CD4-positive, alpha-beta T cell (primary cell): ENCODE measurements at regions of chr1 and their contacts with region 1.

Region 1: DNA sequence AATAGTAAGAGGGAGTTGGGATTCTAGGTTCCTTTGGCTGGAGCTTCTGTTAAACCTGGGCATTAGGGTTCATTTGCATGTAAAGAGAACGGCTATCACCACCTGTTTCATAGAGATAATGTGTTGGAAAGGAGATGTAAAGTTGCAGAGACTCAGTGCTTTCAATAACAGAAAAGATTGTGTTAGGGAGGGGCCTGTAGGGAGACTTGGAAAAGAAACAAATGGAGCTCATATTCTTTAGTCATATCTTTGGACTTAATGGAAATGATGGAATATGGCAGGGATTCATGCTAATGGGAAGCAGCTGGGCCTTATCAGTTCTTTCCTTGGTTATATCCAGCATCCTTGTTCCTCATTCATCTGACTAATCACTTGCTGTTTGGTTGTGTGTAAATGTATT is 144.9 kb downstream of the CD247 start:
- DNase-seq: no peak
- ATAC-seq: no peak
- H3K4me3 ChIP-seq: no peak overlapping the region
- H3K4me3 Mint-ChIP-seq: no peak overlapping the region
- H3K27ac ChIP-seq: no peak overlapping the region
- H3K27ac Mint-ChIP-seq: no peak overlapping the region
- H3K4me1 ChIP-seq: no peaks in the 10 kb centered on the region
- H3K4me1 Mint-ChIP-seq: no peaks in the 10 kb centered on the region
- H3K27me3 ChIP-seq: no peaks in the 10 kb centered on the region
- H3K27me3 Mint-ChIP-seq: no peaks in the 10 kb centered on the region
- CTCF ChIP-seq: no peak

Region 2: GRCh38 chr1:167330601-167331293 is 42.7 kb before region 1 on chr1:
- CTCF ChIA-PET with region 1: no interaction called
- POLR2A ChIA-PET with region 1: no interaction called
- intact Hi-C with region 1: loop called in 1 of 2 experiments (anchors 5 kb)
- DNase-seq: no peak
- ATAC-seq: no peak
- H3K4me3 ChIP-seq: no peak overlapping the region
- H3K4me3 Mint-ChIP-seq: no peak overlapping the region
- H3K27ac ChIP-seq: no peak overlapping the region
- H3K27ac Mint-ChIP-seq: no peak overlapping the region
- H3K4me1 ChIP-seq: no peaks in the 10 kb centered on the region
- H3K4me1 Mint-ChIP-seq: peaks cover 37% of the 10 kb centered on the region
- H3K27me3 ChIP-seq: no peaks in the 10 kb centered on the region
- H3K27me3 Mint-ChIP-seq: no peaks in the 10 kb centered on the region
- CTCF ChIP-seq: no peak